Left lung (tissue), 14 donors: ENCODE measurements at regions of chr1 and their contacts with region 1.

Region 1: GRCh38 chr1:67159233-67159632 is 7.0 kb upstream of the IL23R start:
- DNase-seq: no peak
- ATAC-seq: no peak
- H3K4me3 ChIP-seq: no peak overlapping the region
- H3K27ac ChIP-seq: no peak overlapping the region
- H3K4me1 ChIP-seq: no peaks in the 10 kb centered on the region
- H3K27me3 ChIP-seq: peaks cover 0 to 3% of the 10 kb centered on the region in 2 donors
- CTCF ChIP-seq: no peak

Region 2: GRCh38 chr1:66764994-66765578 is 394.1 kb before region 1 on chr1:
- intact Hi-C with region 1: loop called in 1 of 2 experiments (anchors 10 kb)
- DNase-seq: peak in 2 of 4 donors; percentile 25 to 54
- ATAC-seq: peak; percentile 71
- H3K4me3 ChIP-seq: no peak overlapping the region
- H3K27ac ChIP-seq: no peak overlapping the region
- H3K4me1 ChIP-seq: no peaks in the 10 kb centered on the region
- H3K27me3 ChIP-seq: no peaks in the 10 kb centered on the region
- CTCF ChIP-seq: peak; percentile 62 to 74

Region 3: DNA sequence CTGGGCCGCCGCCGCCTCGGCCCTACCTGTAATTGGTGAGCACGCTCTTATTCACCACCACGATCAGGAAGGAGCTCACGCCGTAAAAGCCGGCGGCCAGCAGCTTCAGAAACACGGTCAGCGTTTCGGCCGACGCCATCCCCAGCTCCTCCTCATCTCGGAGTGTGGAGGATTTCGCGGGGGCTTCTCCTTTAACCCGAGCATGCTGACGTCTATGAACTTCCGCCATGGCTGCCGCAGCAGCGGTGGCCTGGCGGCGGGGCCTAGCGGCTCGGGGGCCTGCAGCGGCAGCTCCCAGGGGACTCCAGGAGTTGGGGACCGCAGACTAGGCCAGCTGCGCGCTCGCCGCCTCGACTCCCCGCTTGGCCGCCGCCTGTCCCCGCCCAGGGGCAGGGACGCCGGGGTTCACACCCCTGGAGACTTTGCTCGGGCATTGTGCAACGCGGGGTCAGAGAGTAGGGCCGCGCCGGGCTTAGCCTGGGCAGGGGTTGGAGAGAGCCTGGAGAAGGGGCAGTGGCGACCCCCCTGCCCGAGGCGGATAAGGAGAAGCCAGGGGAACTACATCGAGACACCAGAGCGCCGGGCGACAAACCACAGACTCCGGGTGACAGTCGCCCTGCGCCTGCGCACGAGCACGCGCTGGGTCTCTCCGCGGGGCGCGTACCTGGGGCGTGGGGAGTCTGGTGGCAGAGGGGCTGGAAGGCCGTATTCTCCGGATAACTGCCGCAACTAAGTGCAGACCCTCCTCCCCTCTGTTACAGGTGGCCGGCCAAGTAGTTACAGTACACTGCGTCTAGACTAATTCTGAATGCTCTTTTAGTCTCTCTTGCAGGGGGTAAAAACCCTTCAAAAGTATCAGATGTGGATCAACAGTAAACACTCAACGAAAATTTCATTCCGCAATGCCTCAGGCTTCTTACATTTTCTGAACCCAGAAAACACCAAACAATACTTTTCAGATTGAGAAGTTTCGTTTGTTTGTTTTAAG is 105.2 kb before region 1 on chr1 and contains the start of gene SLC35D1:
- intact Hi-C with region 1: no loop called
- DNase-seq: peak; percentile 77 to 94 (median 80)
- ATAC-seq: peak; percentile 91
- H3K4me3 ChIP-seq: peak within 1 kb of the TSS; percentile 75 to 81
- H3K27ac ChIP-seq: peak within 1 kb of the TSS; percentile 93 to 94
- H3K4me1 ChIP-seq: peaks cover 0 to 20% of the 10 kb centered on the region in 2 donors
- H3K27me3 ChIP-seq: no peaks in the 10 kb centered on the region
- CTCF ChIP-seq: no peak
- polyA plus RNA-seq, gene SLC35D1: 8.5 to 10.9 (median 9.3) TPM